Gastrocnemius medialis (tissue), 4 donors: ENCODE measurements at regions of chr16 and their contacts with region 1.

Region 1: DNA sequence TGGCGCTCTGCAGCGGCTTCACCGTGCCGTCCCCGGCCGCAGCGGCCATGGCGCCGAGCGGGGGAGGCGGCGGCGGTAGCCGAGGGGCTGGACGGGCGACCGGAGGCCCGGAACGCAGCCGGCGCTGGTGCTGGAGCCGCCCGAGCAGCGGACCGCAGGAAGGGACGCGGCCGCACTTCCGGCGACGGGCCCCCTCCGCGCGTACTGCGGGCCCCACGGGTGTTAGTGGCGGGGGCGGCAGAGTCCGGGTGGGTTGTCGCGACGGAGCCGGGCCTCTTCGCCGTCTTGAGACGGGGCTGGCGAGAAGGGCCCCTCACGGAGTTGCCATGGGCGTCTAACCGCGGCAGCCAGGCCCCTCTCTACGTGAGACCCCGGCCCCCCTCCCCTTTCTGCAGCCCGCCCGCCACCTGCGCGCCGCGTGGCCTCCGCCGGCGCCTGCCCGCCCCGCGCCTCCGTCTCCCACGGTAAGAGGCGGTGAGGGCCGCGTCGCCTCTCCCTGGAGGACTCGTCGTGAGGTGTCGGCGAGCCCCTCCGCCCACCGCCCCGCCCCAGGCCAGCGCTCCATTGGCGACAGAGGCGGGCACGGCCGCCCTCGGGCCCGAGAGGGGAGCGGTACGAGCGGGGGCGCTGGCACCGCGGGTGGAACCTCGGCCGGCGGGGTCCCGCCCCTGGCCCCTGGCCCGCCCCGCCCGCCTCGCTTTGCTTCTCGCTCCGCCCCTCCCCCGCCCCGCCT is at the starts of genes VPS9D1 and ZNF276:
- DNase-seq: peak; percentile 54 to 58
- ATAC-seq: peak; percentile 81
- H3K4me3 ChIP-seq: peak within 1 kb of the TSS; percentile 67 to 92 (median 81)
- H3K27ac ChIP-seq: peak within 1 kb of the TSS; percentile 85 to 99 (median 95)
- H3K4me1 ChIP-seq: peaks cover 27 to 33% of the 10 kb centered on the region in 2 donors
- H3K27me3 ChIP-seq: no peaks in the 10 kb centered on the region
- CTCF ChIP-seq: peak in 1 of 5 experiments; percentile 17
- POLR2A ChIP-seq: peak; percentile 69 to 72
- total RNA-seq, gene VPS9D1: 2.3 to 9.4 (median 3.4) TPM
- total RNA-seq, gene ZNF276: 11.1 to 13.6 (median 11.5) TPM

Region 2: GRCh38 chr16:89657442-89658220 is 63.3 kb before region 1 on chr16 and contains the starts of genes CHMP1A and SPATA33:
- in situ Hi-C with region 1: no loop called
- intact Hi-C with region 1: loop called (anchors 2 kb)
- DNase-seq: peak; percentile 70 to 84
- ATAC-seq: peak; percentile 98
- H3K4me3 ChIP-seq: peak within 1 kb of the TSS; percentile 96 to 100 (median 99)
- H3K27ac ChIP-seq: peak within 1 kb of the TSS; percentile 86 to 91 (median 89)
- H3K4me1 ChIP-seq: peaks cover 18 to 19% of the 10 kb centered on the region in 2 donors
- H3K27me3 ChIP-seq: no peaks in the 10 kb centered on the region
- CTCF ChIP-seq: no peak
- POLR2A ChIP-seq: peak; percentile 54 to 78
- total RNA-seq, gene CHMP1A: 53.4 to 105 (median 78.8) TPM
- total RNA-seq, gene SPATA33: 1.2 to 2.7 (median 2.1) TPM

Region 3: GRCh38 chr16:89686520-89687091 is 34.4 kb before region 1 on chr16 and contains the start of gene CDK10:
- in situ Hi-C with region 1: no loop called
- intact Hi-C with region 1: loop called (anchors 1 kb)
- DNase-seq: peak; percentile 60 to 85
- ATAC-seq: peak; percentile 97
- H3K4me3 ChIP-seq: peak within 1 kb of the TSS; percentile 86 to 90 (median 88)
- H3K27ac ChIP-seq: peak within 1 kb of the TSS; percentile 73 to 92 (median 90)
- H3K4me1 ChIP-seq: peaks cover 11 to 19% of the 10 kb centered on the region in 2 donors
- H3K27me3 ChIP-seq: no peaks in the 10 kb centered on the region
- CTCF ChIP-seq: peak in 1 of 5 experiments; percentile 12
- POLR2A ChIP-seq: peak; percentile 50 to 69
- total RNA-seq, gene CDK10: 16.9 to 26.1 (median 19.7) TPM

Region 4: DNA sequence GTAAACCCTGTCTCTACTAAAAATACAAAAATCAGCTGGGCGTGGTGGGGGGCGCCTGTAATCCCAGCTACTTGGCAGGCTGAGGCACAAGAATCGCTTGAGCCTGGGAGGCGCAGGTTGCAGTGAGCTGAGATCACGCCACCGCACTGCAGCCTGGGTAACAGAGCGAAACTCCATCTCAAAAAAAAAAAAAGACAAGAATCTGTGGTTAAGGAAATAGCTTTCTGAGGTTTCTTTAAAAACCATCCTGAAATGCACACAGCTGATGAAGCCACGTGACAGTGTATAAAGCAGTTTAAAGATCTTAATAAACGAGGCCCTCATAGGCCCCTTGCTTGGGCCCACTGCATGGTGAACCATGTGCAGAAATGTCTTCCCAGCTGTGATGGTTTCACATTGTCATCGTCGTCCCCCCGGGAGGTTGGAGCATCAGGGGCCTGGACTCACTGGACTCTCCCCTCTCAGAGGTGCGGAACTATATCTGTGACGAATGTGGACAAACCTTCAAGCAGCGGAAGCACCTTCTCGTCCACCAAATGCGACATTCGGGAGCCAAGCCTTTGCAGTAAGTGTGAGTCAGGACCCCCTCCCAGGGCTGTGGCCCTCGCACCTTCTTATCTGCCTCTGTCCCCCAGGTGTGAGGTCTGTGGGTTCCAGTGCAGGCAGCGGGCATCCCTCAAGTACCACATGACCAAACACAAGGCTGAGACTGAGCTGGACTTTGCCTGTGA is 16.5 kb after region 1 on chr16:
- in situ Hi-C with region 1: no loop called
- intact Hi-C with region 1: no loop called
- DNase-seq: no peak
- ATAC-seq: no peak
- H3K4me3 ChIP-seq: no peak overlapping the region
- H3K27ac ChIP-seq: no peak overlapping the region
- H3K4me1 ChIP-seq: no peaks in the 10 kb centered on the region
- H3K27me3 ChIP-seq: no peaks in the 10 kb centered on the region
- CTCF ChIP-seq: no peak
- POLR2A ChIP-seq: no peak

Region 5: GRCh38 chr16:89759746-89760340 is 38.9 kb after region 1 on chr16:
- in situ Hi-C with region 1: no loop called
- intact Hi-C with region 1: no loop called
- DNase-seq: no peak
- ATAC-seq: no peak
- H3K4me3 ChIP-seq: no peak overlapping the region
- H3K27ac ChIP-seq: no peak overlapping the region
- H3K4me1 ChIP-seq: no peaks in the 10 kb centered on the region
- H3K27me3 ChIP-seq: no peaks in the 10 kb centered on the region
- CTCF ChIP-seq: no peak
- POLR2A ChIP-seq: no peak

Region 6: GRCh38 chr16:89873972-89874689 is 153.2 kb after region 1 on chr16:
- in situ Hi-C with region 1: no loop called
- intact Hi-C with region 1: loop called (anchors 5 kb)
- DNase-seq: peak; percentile 92 to 94
- ATAC-seq: peak; percentile 74 to 79
- H3K4me3 ChIP-seq: peak overlapping the region; percentile 94 to 99 (median 96)
- H3K27ac ChIP-seq: peak overlapping the region; percentile 99 to 100 (median 100)
- H3K4me1 ChIP-seq: peaks cover 10 to 14% of the 10 kb centered on the region in 2 donors
- H3K27me3 ChIP-seq: no peaks in the 10 kb centered on the region
- CTCF ChIP-seq: no peak
- POLR2A ChIP-seq: no peak

Region 7: GRCh38 chr16:89922884-89923690 is 202.1 kb after region 1 on chr16 and contains the start of gene TUBB3:
- in situ Hi-C with region 1: no loop called
- intact Hi-C with region 1: no loop called
- DNase-seq: no peak
- ATAC-seq: peak; percentile 21 to 38
- H3K4me3 ChIP-seq: peak within 1 kb of the TSS; percentile 59 to 83 (median 61)
- H3K27ac ChIP-seq: peak within 1 kb of the TSS; percentile 22 to 60 (median 39)
- H3K4me1 ChIP-seq: peaks cover 15 to 28% of the 10 kb centered on the region in 2 donors
- H3K27me3 ChIP-seq: peaks cover 60 to 70% (median 64%) of the 10 kb centered on the region in 3 donors
- CTCF ChIP-seq: no peak
- POLR2A ChIP-seq: peak; percentile 54 to 80
- total RNA-seq, gene TUBB3: 1.1 TPM in 1 of 4 donors, not detected in the others